ENCODE measurements at regions of chr15 and their contacts with region 1.

Region 1: DNA sequence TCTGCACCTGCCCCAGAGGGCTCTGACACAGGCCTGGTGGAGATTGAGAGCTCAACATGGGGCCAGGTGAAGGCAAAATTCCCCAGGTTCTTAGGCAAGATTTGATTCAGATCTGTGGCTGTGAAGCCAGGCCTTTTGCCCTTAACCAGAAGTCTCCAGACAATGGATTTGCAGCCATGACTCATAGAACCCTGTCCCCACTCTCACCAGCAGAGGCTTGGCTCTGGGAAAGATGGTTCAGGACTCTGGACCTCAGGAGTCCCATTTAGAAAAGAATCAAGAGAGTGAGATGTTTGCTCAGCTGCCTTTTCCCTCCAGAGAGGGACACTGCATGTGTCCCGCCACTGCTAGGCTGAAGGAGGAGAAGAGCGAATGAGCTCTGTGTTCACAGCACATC is 361.4 kb upstream of the ICE2 start:
- DNase-seq: peak in 1 of 5 donors; percentile 64
- H3K4me3 ChIP-seq: peak overlapping the region; percentile 48 to 60
- H3K4me3 Mint-ChIP-seq: peak overlapping the region; percentile 86 to 93 (median 91)
- H3K27ac ChIP-seq: peak overlapping the region; percentile 66
- H3K27ac Mint-ChIP-seq: peak overlapping the region; percentile 90 to 99 (median 96)
- H3K4me1 ChIP-seq: peaks cover 93% of the 10 kb centered on the region
- H3K4me1 Mint-ChIP-seq: peaks cover 68 to 98% (median 85%) of the 10 kb centered on the region in 4 donors
- H3K27me3 ChIP-seq: no peaks in the 10 kb centered on the region
- H3K27me3 Mint-ChIP-seq: no peaks in the 10 kb centered on the region

Region 2: GRCh38 chr15:60592371-60593169 is 247.7 kb before region 1 on chr15:
- CTCF ChIA-PET with region 1: interaction called, 3 read pairs
- POLR2A ChIA-PET with region 1: interaction called, 280 read pairs
- intact Hi-C with region 1: loop called (anchors 1 kb)
- DNase-seq: peak; percentile 88 to 91 (median 90)
- H3K4me3 ChIP-seq: peak overlapping the region; percentile 39 to 75
- H3K4me3 Mint-ChIP-seq: peak overlapping the region; percentile 80 to 90 (median 87)
- H3K27ac ChIP-seq: peak overlapping the region; percentile 92
- H3K27ac Mint-ChIP-seq: peak overlapping the region; percentile 82 to 94 (median 92)
- H3K4me1 ChIP-seq: peaks cover 36% of the 10 kb centered on the region
- H3K4me1 Mint-ChIP-seq: peaks cover 28 to 55% (median 37%) of the 10 kb centered on the region in 4 donors
- H3K27me3 ChIP-seq: no peaks in the 10 kb centered on the region
- H3K27me3 Mint-ChIP-seq: no peaks in the 10 kb centered on the region

Region 3: DNA sequence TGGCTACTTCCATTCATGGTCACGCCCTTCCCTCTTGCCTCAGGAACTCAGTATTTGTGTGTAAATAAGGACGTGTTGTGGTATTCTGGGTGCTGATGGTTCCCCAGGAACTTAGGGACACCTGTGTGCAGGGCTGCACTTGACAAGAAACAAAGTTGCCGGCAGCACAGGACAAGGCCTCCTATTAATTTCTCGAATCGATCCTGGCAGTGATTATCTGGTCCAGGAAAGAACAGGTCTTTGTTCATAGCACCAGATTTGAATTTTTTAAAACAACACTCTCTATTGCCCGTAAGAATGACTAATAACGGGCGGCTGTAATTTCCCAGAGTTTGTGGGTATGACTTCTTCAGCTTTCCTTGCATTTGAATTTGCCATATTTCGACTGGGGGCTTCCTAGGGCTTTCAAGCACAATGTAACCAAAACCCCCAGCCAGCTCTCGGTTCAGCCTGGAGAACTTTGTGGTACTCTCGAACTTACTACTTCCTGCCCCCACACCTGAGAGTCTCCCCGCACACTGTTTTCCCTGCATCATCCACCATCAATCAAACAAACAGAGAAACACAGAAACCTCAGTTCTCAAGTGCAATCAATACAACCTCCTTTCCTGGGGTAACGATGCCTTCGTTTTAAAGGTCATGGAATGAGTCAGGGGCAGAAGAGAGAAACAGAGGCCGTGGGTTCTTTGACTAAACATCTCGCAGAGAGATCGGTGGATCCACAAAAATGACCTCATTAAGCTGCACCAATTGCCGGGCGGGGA is 119.6 kb before region 1 on chr15:
- CTCF ChIA-PET with region 1: interaction called, 32 read pairs
- POLR2A ChIA-PET with region 1: interaction called, 60 read pairs
- intact Hi-C with region 1: loop called (anchors 1 kb)
- DNase-seq: peak; percentile 59 to 77 (median 64)
- H3K4me3 ChIP-seq: peak overlapping the region; percentile 13 to 42
- H3K4me3 Mint-ChIP-seq: peak overlapping the region; percentile 71 to 88 (median 78)
- H3K27ac ChIP-seq: peak overlapping the region; percentile 72
- H3K27ac Mint-ChIP-seq: peak overlapping the region; percentile 83 to 98 (median 94)
- H3K4me1 ChIP-seq: peaks cover 62% of the 10 kb centered on the region
- H3K4me1 Mint-ChIP-seq: peaks cover 51 to 76% (median 57%) of the 10 kb centered on the region in 4 donors
- H3K27me3 ChIP-seq: no peaks in the 10 kb centered on the region
- H3K27me3 Mint-ChIP-seq: no peaks in the 10 kb centered on the region

Region 4: GRCh38 chr15:60798821-60799220 is 41.5 kb before region 1 on chr15:
- CTCF ChIA-PET with region 1: interaction called, 17 read pairs
- POLR2A ChIA-PET with region 1: interaction called, 151 read pairs
- intact Hi-C with region 1: loop called (anchors 1 kb)
- DNase-seq: peak in 1 of 5 donors; percentile 57
- H3K4me3 ChIP-seq: no peak overlapping the region
- H3K4me3 Mint-ChIP-seq: peak overlapping the region in 5 of 8 donors; percentile 25 to 55 (median 48)
- H3K27ac ChIP-seq: peak overlapping the region; percentile 56
- H3K27ac Mint-ChIP-seq: peak overlapping the region; percentile 87 to 98 (median 93)
- H3K4me1 ChIP-seq: peaks cover 95% of the 10 kb centered on the region
- H3K4me1 Mint-ChIP-seq: peaks cover 67 to 97% (median 85%) of the 10 kb centered on the region in 4 donors
- H3K27me3 ChIP-seq: no peaks in the 10 kb centered on the region
- H3K27me3 Mint-ChIP-seq: no peaks in the 10 kb centered on the region

Region 5: DNA sequence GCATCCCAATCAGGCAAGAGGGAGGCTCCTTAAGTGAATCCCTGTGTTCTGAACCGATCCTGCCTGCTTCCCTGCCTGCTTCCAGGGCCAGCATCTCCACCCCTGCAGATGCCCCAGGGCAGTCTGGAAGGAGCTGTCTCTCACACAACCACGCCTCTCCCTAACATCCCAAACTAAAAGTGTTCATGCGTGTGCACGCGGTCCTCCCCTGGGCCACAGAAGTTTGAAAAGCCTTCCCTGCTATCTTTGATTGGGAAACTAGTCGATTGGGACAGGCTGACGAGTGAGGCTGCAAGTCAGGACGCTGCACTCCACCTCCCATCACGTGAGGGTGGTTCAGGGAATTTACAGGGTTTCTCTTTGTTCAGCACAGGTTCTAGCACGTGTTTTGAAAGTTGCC is 20.4 kb before region 1 on chr15:
- CTCF ChIA-PET with region 1: interaction called, 5 read pairs
- POLR2A ChIA-PET with region 1: interaction called, 42 read pairs
- intact Hi-C with region 1: no loop called
- DNase-seq: peak in 2 of 5 donors; percentile 30 to 45
- H3K4me3 ChIP-seq: no peak overlapping the region
- H3K4me3 Mint-ChIP-seq: peak overlapping the region; percentile 58 to 85 (median 77)
- H3K27ac ChIP-seq: peak overlapping the region; percentile 41
- H3K27ac Mint-ChIP-seq: peak overlapping the region; percentile 83 to 98 (median 96)
- H3K4me1 ChIP-seq: peaks cover 59% of the 10 kb centered on the region
- H3K4me1 Mint-ChIP-seq: peaks cover 41 to 71% (median 54%) of the 10 kb centered on the region in 4 donors
- H3K27me3 ChIP-seq: no peaks in the 10 kb centered on the region
- H3K27me3 Mint-ChIP-seq: no peaks in the 10 kb centered on the region

Region 6: DNA sequence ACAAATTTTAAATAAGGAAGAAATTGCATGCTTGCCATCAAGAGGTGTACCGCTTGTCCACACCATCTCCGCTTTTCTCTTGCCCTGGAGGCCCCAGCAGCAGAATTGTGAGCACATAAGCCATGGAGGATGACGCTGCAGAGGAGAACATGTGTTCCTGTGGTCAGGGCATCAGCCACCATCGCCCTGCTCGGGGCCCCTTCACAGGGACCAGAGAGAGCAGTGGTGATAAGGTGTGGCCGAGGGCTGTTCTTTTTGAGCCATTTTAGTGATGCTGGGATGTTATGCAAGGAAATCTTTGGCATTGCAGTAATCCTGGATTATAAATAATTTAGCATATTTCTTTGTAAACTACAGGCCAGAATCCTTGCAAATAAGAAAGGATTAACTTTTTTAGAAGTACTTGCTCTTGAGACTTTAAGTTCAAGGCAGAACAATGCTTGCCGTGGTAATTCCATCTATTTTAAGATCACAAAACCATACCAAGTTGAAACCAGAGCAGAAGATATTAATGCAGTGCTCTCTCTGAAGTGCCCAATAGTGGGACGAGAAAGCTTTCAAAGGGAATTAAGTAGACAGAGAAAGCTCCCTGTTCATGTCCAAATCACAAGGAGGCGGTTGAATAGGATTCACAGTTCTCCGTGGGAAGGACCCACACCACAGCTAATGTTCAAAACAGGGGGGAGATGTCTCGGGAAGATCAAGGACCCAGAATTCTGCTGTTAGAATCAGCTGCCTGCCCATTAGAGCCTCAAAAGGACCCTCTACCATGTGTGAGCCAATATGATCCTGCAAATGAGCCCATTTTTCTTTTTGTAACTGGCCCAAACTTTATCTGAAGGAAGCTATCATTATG is 50.3 kb after region 1 on chr15:
- CTCF ChIA-PET with region 1: no interaction called
- POLR2A ChIA-PET with region 1: no interaction called
- intact Hi-C with region 1: no loop called
- DNase-seq: no peak
- H3K4me3 ChIP-seq: no peak overlapping the region
- H3K4me3 Mint-ChIP-seq: no peak overlapping the region
- H3K27ac ChIP-seq: no peak overlapping the region
- H3K27ac Mint-ChIP-seq: no peak overlapping the region
- H3K4me1 ChIP-seq: no peaks in the 10 kb centered on the region
- H3K4me1 Mint-ChIP-seq: peaks cover 0 to 2% (median 0%) of the 10 kb centered on the region in 4 donors
- H3K27me3 ChIP-seq: no peaks in the 10 kb centered on the region
- H3K27me3 Mint-ChIP-seq: no peaks in the 10 kb centered on the region

Region 7: GRCh38 chr15:60905587-60905986 is 65.3 kb after region 1 on chr15:
- CTCF ChIA-PET with region 1: interaction called, 4 read pairs
- POLR2A ChIA-PET with region 1: interaction called, 4 read pairs
- intact Hi-C with region 1: loop called (anchors 5 kb)
- DNase-seq: peak; percentile 36 to 50 (median 43)
- H3K4me3 ChIP-seq: no peak overlapping the region
- H3K4me3 Mint-ChIP-seq: no peak overlapping the region
- H3K27ac ChIP-seq: no peak overlapping the region
- H3K27ac Mint-ChIP-seq: peak overlapping the region in 1 of 7 donors; percentile 32
- H3K4me1 ChIP-seq: no peaks in the 10 kb centered on the region
- H3K4me1 Mint-ChIP-seq: peaks cover 3 to 20% (median 5%) of the 10 kb centered on the region in 4 donors
- H3K27me3 ChIP-seq: no peaks in the 10 kb centered on the region
- H3K27me3 Mint-ChIP-seq: no peaks in the 10 kb centered on the region